Ovary (tissue), 10 donors: ENCODE measurements at regions of chr7 and their contacts with region 1.

Region 1: GRCh38 chr7:6272481-6273323 is at the start of gene CYTH3:
- DNase-seq: peak; percentile 74 to 91 (median 84)
- H3K4me3 ChIP-seq: peak within 1 kb of the TSS; percentile 56
- H3K27ac ChIP-seq: peak within 1 kb of the TSS; percentile 3 to 63
- H3K4me1 ChIP-seq: peaks cover 10% of the 10 kb centered on the region
- H3K27me3 ChIP-seq: no peaks in the 10 kb centered on the region
- CTCF ChIP-seq: no peak
- EP300 ChIP-seq: no peak
- POLR2A ChIP-seq: peak; percentile 36
- total RNA-seq, gene CYTH3: 14.8 to 29.6 (median 18.7) TPM

Region 2: DNA sequence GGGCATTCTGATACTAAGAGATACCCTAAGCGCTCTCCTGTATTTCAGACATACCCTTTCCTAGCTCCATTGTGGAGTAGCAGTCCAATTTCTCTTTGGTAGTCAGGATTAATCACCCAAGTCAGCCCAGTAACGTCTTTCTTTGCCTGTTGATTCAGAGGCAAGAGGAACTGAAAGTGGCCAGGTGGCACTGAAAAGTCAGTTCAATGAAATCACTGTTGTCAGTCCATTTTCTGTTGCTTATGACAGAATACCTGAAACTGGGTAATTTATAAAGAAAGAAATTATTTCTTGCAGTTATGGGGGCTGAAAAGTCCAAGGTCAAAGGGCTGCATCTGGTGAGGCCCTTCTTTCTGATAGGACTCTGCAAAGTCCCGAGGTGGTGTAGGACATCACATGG is 201.3 kb before region 1 on chr7:
- intact Hi-C with region 1: no loop called
- DNase-seq: no peak
- H3K4me3 ChIP-seq: no peak overlapping the region
- H3K27ac ChIP-seq: no peak overlapping the region
- H3K4me1 ChIP-seq: no peaks in the 10 kb centered on the region
- H3K27me3 ChIP-seq: no peaks in the 10 kb centered on the region
- CTCF ChIP-seq: no peak
- EP300 ChIP-seq: no peak
- POLR2A ChIP-seq: no peak

Region 3: GRCh38 chr7:6221340-6222319 is 51.1 kb before region 1 on chr7:
- intact Hi-C with region 1: no loop called
- DNase-seq: no peak
- H3K4me3 ChIP-seq: no peak overlapping the region
- H3K27ac ChIP-seq: no peak overlapping the region
- H3K4me1 ChIP-seq: peaks cover 9% of the 10 kb centered on the region
- H3K27me3 ChIP-seq: no peaks in the 10 kb centered on the region
- CTCF ChIP-seq: no peak
- EP300 ChIP-seq: no peak
- POLR2A ChIP-seq: no peak

Region 4: GRCh38 chr7:6294839-6295238 is 22.1 kb after region 1 on chr7:
- intact Hi-C with region 1: no loop called
- DNase-seq: no peak
- H3K4me3 ChIP-seq: no peak overlapping the region
- H3K27ac ChIP-seq: no peak overlapping the region
- H3K4me1 ChIP-seq: no peaks in the 10 kb centered on the region
- H3K27me3 ChIP-seq: no peaks in the 10 kb centered on the region
- CTCF ChIP-seq: no peak
- EP300 ChIP-seq: no peak
- POLR2A ChIP-seq: no peak

Region 5: DNA sequence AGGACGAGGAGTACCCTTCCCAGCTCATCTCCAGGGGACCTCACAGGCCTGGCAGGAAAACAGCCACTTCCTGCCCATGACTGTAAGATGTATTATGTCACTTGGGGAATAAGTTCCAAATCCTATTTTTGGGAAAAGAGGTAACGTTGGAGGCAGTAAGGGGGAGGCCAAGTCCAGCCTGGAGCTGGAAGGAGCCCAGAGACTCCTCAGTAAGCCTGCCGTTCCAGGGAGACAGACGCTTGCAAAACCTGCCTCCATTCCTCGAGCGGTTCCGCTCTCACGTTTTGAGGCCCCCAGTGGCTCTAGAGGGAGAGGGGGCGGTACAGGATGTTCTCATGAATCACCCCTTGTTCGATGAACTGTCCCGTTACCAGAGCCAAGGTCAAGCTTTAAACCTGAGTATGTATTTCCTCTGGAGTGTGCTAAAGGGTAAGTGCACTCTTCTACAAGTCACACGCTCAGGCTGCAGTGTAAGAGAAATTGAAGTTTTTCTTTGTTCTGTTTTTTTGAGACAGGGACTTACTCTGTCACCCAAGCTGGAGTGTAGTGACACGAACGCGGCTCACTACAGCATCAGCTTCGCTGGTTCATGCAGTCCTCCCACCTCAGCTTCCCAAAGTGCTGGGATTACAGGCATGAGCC is 45.2 kb after region 1 on chr7:
- intact Hi-C with region 1: loop called in 1 of 4 experiments (anchors 2 kb)
- DNase-seq: peak; percentile 32 to 86 (median 76)
- H3K4me3 ChIP-seq: no peak overlapping the region
- H3K27ac ChIP-seq: no peak overlapping the region
- H3K4me1 ChIP-seq: peaks cover 9% of the 10 kb centered on the region
- H3K27me3 ChIP-seq: no peaks in the 10 kb centered on the region
- CTCF ChIP-seq: no peak
- EP300 ChIP-seq: no peak
- POLR2A ChIP-seq: no peak